Colonic mucosa (tissue), 4 donors: ENCODE measurements at regions of chr10 and their contacts with region 1.

Region 1: DNA sequence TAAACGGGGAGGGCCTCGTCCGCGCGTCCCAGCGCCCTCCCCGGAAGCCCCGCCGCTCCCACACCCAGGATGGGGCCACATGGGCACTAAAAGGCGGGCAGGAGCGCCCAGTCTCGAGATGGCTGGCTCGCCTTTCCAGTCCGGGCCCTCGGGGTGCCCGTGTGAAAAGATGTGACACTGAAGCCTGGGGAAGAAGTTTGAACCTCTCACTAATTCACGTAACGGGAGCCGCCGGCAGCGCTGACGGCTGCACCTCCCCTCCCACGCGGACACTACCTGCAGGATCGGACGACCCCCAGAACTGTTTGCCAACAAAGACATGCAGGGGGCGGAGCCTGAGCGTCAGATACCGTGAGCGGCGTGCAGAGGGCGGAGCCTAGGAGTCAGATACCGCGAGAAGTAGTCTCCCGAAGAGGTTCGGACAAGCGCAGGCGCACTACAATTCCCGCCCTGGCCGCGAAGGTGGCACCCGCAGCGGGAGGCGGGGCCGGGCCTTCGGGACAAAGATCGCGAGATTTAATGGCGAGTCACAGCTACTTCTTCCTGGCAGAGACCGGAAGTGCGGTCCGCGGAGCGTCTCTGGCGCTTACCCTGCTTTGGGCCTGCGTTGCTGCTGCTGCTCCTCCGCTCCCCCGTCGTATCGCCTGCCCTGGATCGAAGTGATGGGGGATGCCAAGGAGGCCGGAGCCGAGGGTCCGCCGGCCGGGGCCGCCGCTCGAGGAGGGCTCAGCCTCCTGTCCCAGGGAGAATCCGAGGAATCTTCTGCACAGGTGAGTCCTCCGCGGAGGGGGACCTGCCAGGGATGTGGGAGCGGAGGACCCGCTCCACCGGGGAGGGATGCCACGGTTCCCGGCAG is at the start of gene EDRF1:
- DNase-seq: peak; percentile 99
- H3K4me3 ChIP-seq: peak within 1 kb of the TSS; percentile 95
- H3K27ac ChIP-seq: peak within 1 kb of the TSS; percentile 80
- H3K4me1 ChIP-seq: peaks cover 4% of the 10 kb centered on the region
- H3K27me3 ChIP-seq: no peaks in the 10 kb centered on the region
- CTCF ChIP-seq: no peak
- total RNA-seq, gene EDRF1: 16.4 to 20.4 TPM

Region 2: GRCh38 chr10:125797994-125798662 is 78.8 kb after region 1 on chr10:
- intact Hi-C with region 1: no loop called
- DNase-seq: no peak
- H3K4me3 ChIP-seq: no peak overlapping the region
- H3K27ac ChIP-seq: no peak overlapping the region
- H3K4me1 ChIP-seq: no peaks in the 10 kb centered on the region
- H3K27me3 ChIP-seq: no peaks in the 10 kb centered on the region
- CTCF ChIP-seq: no peak

Region 3: GRCh38 chr10:125822878-125823662 is 103.7 kb after region 1 on chr10 and contains the starts of genes BCCIP and UROS:
- intact Hi-C with region 1: loop called (anchors 5 kb)
- DNase-seq: peak; percentile 91
- H3K4me3 ChIP-seq: peak within 1 kb of the TSS; percentile 83
- H3K27ac ChIP-seq: peak within 1 kb of the TSS; percentile 76
- H3K4me1 ChIP-seq: peaks cover 5% of the 10 kb centered on the region
- H3K27me3 ChIP-seq: no peaks in the 10 kb centered on the region
- CTCF ChIP-seq: no peak
- total RNA-seq, gene BCCIP: 36.0 to 67.2 TPM
- total RNA-seq, gene UROS: 19.9 to 30.2 TPM

Region 4: GRCh38 chr10:125878957-125879835 is 159.8 kb after region 1 on chr10:
- intact Hi-C with region 1: no loop called
- DNase-seq: no peak
- H3K4me3 ChIP-seq: no peak overlapping the region
- H3K27ac ChIP-seq: no peak overlapping the region
- H3K4me1 ChIP-seq: no peaks in the 10 kb centered on the region
- H3K27me3 ChIP-seq: no peaks in the 10 kb centered on the region
- CTCF ChIP-seq: no peak